Naive thymus-derived CD8-positive, alpha-beta T cell (primary cell): ENCODE measurements at regions of chr20 and their contacts with region 1.

Region 1: DNA sequence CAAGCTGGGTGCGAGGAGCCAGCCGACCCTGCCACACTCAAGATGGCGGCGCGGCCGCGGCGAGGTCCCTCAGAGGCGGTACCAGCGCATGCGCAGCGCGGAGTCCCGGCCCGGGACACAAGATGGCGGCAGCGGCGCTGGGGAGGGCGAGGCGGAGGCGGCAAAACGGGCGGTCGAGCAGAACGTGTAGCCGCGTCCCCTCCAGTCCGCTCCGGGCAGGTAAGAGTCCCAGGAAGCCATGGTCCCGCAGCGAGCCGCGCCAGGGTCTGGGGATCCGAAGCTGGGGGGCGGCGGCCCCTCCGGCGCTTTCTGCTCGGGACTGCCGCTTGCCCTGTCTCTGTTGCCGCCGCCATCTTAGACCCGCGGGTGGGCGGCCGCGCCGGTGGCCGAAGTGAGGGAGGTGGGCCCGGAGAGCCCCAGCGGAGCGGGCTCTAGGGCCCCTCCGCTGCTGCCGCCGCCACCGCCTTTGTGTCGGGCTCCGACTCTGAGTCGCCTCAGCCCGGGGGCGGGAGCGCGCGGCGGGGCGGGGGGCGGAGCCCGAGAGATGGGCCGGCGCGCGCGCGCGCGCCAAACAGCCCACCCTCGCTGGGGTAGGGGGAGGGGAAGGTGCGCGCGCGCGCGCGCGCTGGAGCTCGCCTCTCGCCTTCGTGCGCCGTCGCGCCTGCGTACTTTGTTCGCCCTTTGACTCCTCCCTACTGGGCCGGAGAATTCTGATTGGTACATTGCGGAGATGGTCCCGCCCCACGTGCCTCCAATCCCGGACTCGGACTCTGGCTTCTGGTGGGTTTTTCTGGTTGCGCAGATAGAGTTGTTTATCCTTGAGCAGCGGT is at the start of gene PCIF1:
- DNase-seq: peak; percentile 97 to 100 (median 99)
- ATAC-seq: peak; percentile 80 to 86
- H3K4me3 Mint-ChIP-seq: peak within 1 kb of the TSS; percentile 93 to 100 (median 97)
- H3K27ac Mint-ChIP-seq: peak within 1 kb of the TSS; percentile 94 to 100 (median 99)
- H3K4me1 Mint-ChIP-seq: peaks cover 13 to 46% (median 27%) of the 10 kb centered on the region in 4 donors
- H3K27me3 Mint-ChIP-seq: no peaks in the 10 kb centered on the region
- polyA plus RNA-seq, gene PCIF1: 60.8 to 94.2 (median 78.7) TPM

Region 2: DNA sequence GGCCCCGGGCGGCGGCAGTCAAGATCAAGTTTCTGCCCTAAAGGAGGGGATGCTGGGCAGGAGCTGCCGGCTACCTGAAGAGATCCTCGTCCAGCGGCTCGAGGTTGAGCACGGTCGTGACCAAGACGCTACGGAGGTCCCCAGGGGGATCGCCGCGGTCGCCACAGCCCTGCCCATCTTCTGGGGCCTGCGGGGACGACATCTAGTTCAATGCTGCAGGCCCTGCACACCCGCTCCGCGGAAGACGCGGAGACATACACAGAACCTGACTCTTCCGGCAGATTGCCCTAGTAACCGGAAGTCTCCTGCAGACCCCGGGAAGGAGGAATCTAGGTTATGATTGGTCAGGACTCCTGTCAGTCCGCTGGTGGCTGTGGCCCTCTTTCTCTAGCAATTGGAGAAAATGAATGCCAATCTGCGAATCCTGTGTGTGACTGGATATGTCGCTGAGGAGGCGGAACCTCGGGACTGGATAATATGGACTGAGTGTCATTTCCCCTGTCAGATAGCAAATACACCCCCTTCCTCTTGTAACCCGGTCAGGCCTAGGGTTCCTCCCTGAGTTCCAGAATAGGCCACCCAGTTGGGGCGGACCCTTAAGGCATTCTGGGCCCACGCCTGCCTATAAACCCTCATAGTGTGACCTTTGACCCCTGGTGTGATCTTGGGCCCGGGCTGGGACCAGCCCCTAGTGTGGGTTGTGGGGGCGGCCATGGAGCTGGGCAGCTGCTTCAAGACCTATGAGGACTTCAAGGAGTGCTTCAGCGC is 77.5 kb before region 1 on chr20 and contains the starts of genes ACOT8 and ZSWIM3:
- POLR2A ChIA-PET with region 1: interaction called, 71 read pairs
- DNase-seq: peak; percentile 68 to 99 (median 96)
- ATAC-seq: peak; percentile 97
- H3K4me3 Mint-ChIP-seq: peak within 1 kb of the TSS; percentile 94 to 97 (median 96)
- H3K27ac Mint-ChIP-seq: peak within 1 kb of the TSS; percentile 96 to 99 (median 98)
- H3K4me1 Mint-ChIP-seq: peaks cover 21 to 62% (median 58%) of the 10 kb centered on the region in 4 donors
- H3K27me3 Mint-ChIP-seq: no peaks in the 10 kb centered on the region
- polyA plus RNA-seq, gene ACOT8: 37.5 to 46.2 (median 38.4) TPM
- polyA plus RNA-seq, gene ZSWIM3: 0.35 to 2.1 (median 0.65) TPM

Region 3: DNA sequence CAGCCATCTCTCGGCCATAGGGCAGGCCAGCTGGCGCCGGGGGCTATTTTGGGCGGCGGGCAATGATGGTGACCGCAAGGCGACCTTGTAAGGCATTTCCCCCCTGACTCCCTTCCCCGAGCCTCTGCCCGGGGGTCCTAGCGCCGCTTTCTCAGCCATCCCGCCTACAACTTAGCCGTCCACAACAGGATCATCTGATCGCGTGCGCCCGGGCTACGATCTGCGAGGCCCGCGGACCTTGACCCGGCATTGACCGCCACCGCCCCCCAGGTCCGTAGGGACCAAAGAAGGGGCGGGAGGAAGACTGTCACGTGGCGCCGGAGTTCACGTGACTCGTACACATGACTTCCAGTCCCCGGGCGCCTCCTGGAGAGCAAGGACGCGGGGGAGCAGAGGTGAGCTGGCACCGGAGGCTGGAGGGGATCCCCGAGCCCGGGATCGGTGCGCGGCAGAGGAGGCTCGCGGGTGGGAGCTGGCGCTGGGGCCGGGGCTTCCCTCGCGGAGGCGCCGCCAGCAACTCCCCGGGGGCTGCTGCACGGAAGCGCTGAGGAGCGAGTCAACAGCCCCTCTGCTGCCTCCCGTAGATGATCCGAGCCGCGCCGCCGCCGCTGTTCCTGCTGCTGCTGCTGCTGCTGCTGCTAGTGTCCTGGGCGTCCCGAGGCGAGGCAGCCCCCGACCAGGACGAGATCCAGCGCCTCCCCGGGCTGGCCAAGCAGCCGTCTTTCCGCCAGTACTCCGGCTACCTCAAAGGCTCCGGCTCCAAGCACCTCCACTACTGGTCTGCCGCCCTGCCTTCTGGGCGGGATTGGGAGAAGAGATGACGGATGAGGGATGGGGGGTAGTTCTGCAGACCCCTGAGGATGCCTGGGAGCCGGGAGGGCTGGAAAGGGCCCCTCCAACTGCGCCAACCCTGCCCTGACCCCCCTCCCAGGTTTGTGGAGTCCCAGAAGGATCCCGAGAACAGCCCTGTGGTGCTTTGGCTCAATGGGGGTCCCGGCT is 43.5 kb before region 1 on chr20 and contains the starts of genes CTSA and NEURL2:
- POLR2A ChIA-PET with region 1: interaction called, 120 read pairs
- DNase-seq: peak; percentile 72 to 92 (median 82)
- ATAC-seq: peak; percentile 80 to 86
- H3K4me3 Mint-ChIP-seq: peak within 1 kb of the TSS; percentile 92 to 96 (median 94)
- H3K27ac Mint-ChIP-seq: peak within 1 kb of the TSS; percentile 88 to 96 (median 94)
- H3K4me1 Mint-ChIP-seq: peaks cover 15 to 50% (median 43%) of the 10 kb centered on the region in 4 donors
- H3K27me3 Mint-ChIP-seq: no peaks in the 10 kb centered on the region
- polyA plus RNA-seq, gene CTSA: 79.5 to 128 (median 90.5) TPM
- polyA plus RNA-seq, gene NEURL2: 0.53 to 2.2 (median 1.8) TPM

Region 4: GRCh38 chr20:45905505-45906079 is 29.2 kb before region 1 on chr20:
- POLR2A ChIA-PET with region 1: interaction called, 31 read pairs
- DNase-seq: no peak
- ATAC-seq: no peak
- H3K4me3 Mint-ChIP-seq: no peak overlapping the region
- H3K27ac Mint-ChIP-seq: no peak overlapping the region
- H3K4me1 Mint-ChIP-seq: peaks cover under 1 to 7% (median 2%) of the 10 kb centered on the region in 4 donors
- H3K27me3 Mint-ChIP-seq: no peaks in the 10 kb centered on the region

Region 5: GRCh38 chr20:45924391-45925261 is 10.2 kb before region 1 on chr20:
- POLR2A ChIA-PET with region 1: interaction called, 12 read pairs
- DNase-seq: no peak
- ATAC-seq: no peak
- H3K4me3 Mint-ChIP-seq: no peak overlapping the region
- H3K27ac Mint-ChIP-seq: peak overlapping the region in 1 of 10 donors; percentile 8
- H3K4me1 Mint-ChIP-seq: peaks cover 0 to 8% (median 5%) of the 10 kb centered on the region in 4 donors
- H3K27me3 Mint-ChIP-seq: peaks cover 0 to 13% (median 6%) of the 10 kb centered on the region in 5 donors

Region 6: DNA sequence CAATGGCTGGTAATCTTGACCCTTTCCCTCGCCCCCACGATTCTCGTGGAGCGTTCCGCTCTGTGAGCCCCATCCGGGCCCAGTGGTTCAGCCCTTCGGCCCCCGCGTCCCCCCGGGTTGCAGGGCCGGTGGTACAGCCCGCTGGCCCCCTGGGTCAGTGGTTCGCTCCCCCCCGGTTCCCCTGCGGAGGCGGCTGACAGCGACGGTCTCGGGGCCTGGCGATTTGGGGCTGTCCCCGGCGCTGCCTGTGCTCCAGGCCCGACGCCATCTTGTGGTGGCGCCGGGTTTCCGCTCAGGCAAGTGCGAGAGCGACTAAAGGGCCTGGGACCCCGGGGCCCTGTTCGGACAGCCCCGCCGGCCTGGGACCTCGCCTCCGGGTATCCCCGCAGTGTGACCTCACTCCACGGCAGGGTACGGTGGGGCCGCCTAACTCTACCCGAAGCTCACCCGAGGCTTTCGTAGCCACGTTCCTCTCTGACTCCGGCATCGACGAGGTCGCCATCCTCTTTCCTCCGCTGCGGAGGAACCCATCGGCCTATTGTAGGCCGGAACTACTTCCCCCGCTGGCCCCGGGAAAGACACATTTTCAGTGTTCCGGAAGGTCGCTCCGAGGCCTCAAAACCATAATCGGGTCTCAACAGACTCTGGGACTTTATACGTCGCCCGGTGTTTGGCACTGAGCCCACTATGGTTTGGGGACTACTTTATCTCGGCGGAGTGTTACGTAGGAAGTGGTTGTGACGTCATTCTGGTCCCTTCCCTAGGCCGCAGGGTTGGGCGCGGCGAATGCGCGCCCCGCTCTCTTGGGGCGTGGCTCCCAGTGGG is 37.1 kb after region 1 on chr20 and contains the start of gene ZNF335:
- POLR2A ChIA-PET with region 1: interaction called, 216 read pairs
- DNase-seq: peak; percentile 86 to 100 (median 94)
- ATAC-seq: peak; percentile 79 to 83
- H3K4me3 Mint-ChIP-seq: peak within 1 kb of the TSS; percentile 89 to 98 (median 95)
- H3K27ac Mint-ChIP-seq: peak within 1 kb of the TSS; percentile 99 to 100 (median 100)
- H3K4me1 Mint-ChIP-seq: peaks cover 12 to 26% (median 23%) of the 10 kb centered on the region in 4 donors
- H3K27me3 Mint-ChIP-seq: peaks cover 0 to 5% (median 0%) of the 10 kb centered on the region in 5 donors
- polyA plus RNA-seq, gene ZNF335: 6.4 to 13.2 (median 7.8) TPM